Vagina (tissue), 2 donors: ENCODE measurements at regions of chr6 and their contacts with region 1.

Region 1: GRCh38 chr6:85642774-85643536 is at the start of gene SYNCRIP:
- DNase-seq: peak; percentile 97 to 99
- H3K4me3 ChIP-seq: peak within 1 kb of the TSS; percentile 98 to 100
- H3K27ac ChIP-seq: peak within 1 kb of the TSS; percentile 98
- H3K4me1 ChIP-seq: peaks cover 46% of the 10 kb centered on the region
- H3K27me3 ChIP-seq: no peaks in the 10 kb centered on the region
- CTCF ChIP-seq: no peak
- POLR2A ChIP-seq: peak in 1 of 2 donors; percentile 97
- total RNA-seq, gene SYNCRIP: 60.9 TPM

Region 2: DNA sequence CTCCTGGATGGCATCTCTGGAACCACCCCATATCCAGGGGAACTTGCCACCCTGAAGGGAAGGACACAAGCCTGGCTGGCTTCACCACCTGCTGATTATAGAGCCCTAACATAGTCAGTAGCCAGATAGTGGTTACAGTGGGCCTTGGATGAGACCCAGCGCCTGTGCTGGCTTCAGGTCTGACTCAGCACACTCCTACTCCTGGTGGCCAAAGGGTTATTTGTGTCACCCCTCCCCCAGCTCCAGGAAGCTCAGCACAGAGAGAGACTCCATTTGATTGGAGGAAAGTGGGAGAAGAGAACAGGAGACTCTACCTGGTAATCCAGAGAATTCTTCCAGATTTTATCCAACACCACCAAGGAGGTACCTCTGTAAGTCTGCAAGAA is 62.1 kb before region 1 on chr6:
- intact Hi-C with region 1: no loop called
- DNase-seq: no peak
- H3K4me3 ChIP-seq: no peak overlapping the region
- H3K27ac ChIP-seq: no peak overlapping the region
- H3K4me1 ChIP-seq: peaks cover 22% of the 10 kb centered on the region
- H3K27me3 ChIP-seq: no peaks in the 10 kb centered on the region
- CTCF ChIP-seq: no peak
- POLR2A ChIP-seq: no peak

Region 3: GRCh38 chr6:85593438-85594196 is 49.3 kb before region 1 on chr6 and contains the start of gene SNX14:
- intact Hi-C with region 1: loop called (anchors 2 kb)
- DNase-seq: peak in 1 of 2 donors; percentile 96
- H3K4me3 ChIP-seq: peak within 1 kb of the TSS; percentile 89 to 93
- H3K27ac ChIP-seq: peak within 1 kb of the TSS; percentile 94
- H3K4me1 ChIP-seq: peaks cover 19% of the 10 kb centered on the region
- H3K27me3 ChIP-seq: no peaks in the 10 kb centered on the region
- CTCF ChIP-seq: no peak
- POLR2A ChIP-seq: peak in 1 of 2 donors; percentile 75
- total RNA-seq, gene SNX14: 64.8 TPM

Region 4: GRCh38 chr6:85678602-85679444 is 35.9 kb after region 1 on chr6:
- intact Hi-C with region 1: loop called (anchors 1 kb)
- DNase-seq: peak; percentile 97 to 99
- H3K4me3 ChIP-seq: peak overlapping the region; percentile 90 to 97
- H3K27ac ChIP-seq: peak overlapping the region; percentile 86
- H3K4me1 ChIP-seq: peaks cover 36% of the 10 kb centered on the region
- H3K27me3 ChIP-seq: no peaks in the 10 kb centered on the region
- CTCF ChIP-seq: peak in 1 of 3 experiments; percentile 9
- POLR2A ChIP-seq: peak; percentile 27 to 99